PC-9 (cell line): ENCODE measurements at regions of chr1 and their contacts with region 1.

Region 1: GRCh38 chr1:84271441-84272151 is 29.9 kb upstream of the SAMD13 start:
- DNase-seq: peak; percentile 7 to 53
- H3K4me3 ChIP-seq: no peak overlapping the region
- H3K27ac ChIP-seq: peak overlapping the region; percentile 31
- H3K4me1 ChIP-seq: peaks cover 51% of the 10 kb centered on the region
- H3K27me3 ChIP-seq: no peaks in the 10 kb centered on the region
- CTCF ChIP-seq: no peak

Region 2: DNA sequence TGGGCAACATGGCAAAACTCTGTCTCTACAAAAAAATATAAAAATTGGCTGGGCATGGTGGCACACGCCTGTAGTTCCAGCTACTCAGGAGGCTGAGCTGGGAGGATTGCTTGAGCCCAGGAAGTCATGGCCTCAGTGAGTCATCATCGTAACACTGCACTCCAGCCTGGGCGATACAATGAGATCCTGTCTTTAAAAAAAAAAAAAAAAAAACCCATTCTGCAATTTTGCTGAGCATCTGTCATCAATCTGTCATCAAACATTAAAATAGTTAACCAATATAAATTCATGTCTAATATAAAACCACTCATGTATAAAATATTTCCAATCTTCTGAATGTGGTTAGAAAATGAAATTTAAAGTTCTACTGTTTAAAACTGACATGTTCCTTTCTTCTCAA is 564.5 kb after region 1 on chr1:
- CTCF ChIA-PET with region 1: no interaction called
- POLR2A ChIA-PET with region 1: interaction called, 16 read pairs
- intact Hi-C with region 1: no loop called
- DNase-seq: peak in 1 of 2 experiments; percentile 50
- H3K4me3 ChIP-seq: no peak overlapping the region
- H3K27ac ChIP-seq: no peak overlapping the region
- H3K4me1 ChIP-seq: peaks cover 32% of the 10 kb centered on the region
- H3K27me3 ChIP-seq: no peaks in the 10 kb centered on the region
- CTCF ChIP-seq: no peak